WTC11 (cell line): ENCODE measurements at regions of chr19 and their contacts with region 1.

Region 1: DNA sequence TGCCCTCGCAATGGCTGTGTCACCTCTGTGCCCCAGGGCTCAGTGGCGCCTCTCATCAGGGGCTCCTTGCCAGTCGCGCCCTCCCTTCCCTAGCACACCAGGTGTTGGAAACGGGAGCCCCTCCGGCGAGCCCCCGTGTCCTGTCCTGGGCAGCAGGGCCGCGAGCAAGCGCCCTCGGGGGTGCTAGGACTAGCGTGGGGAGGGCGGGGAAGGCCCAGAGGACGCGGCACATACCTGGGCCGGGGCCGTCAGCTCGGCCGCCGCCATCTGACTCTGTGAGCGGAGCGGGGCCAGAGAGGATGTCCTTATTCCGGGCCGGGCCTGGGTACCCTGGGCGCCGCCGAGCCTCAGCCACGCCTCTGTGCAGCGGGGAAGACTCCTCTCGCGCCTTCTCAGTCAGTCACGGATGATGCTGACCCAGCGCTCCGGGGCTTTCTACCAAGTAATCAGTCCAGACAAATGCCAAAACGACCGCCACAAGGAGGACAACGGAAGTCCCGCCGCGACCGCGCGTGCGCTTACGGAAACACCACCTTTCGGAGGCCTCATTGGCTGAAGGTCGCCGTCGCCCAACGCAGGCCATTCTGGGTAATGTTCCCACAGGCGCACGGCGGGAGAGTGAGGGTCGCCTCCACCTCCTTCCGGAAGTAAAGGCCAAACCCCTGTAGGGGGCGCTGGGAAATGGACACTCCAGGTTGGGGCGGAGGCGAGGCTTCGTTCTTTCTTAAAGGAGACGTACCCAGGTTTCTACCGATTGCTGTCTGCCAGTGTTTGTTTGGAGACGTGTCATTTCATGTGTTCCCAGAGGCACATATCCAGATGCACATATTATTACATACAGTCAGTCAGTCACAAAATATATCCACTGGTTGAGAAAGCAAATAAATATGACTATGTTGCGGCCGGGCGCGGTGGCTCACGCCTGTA is at the start of gene ZNF256:
- DNase-seq: peak; percentile 99
- ATAC-seq: peak; percentile 98
- H3K4me3 Mint-ChIP-seq: peak within 1 kb of the TSS; percentile 92
- H3K27ac Mint-ChIP-seq: peak within 1 kb of the TSS; percentile 87
- H3K4me1 Mint-ChIP-seq: peaks cover 13% of the 10 kb centered on the region
- H3K27me3 Mint-ChIP-seq: peaks cover 19% of the 10 kb centered on the region
- CTCF ChIP-seq: peak; percentile 63; the same call in 1 of the 2 replicates
- total RNA-seq, gene ZNF256: 15.1 to 17.9 TPM (median 15.9 TPM) in 3 replicates

Region 2: DNA sequence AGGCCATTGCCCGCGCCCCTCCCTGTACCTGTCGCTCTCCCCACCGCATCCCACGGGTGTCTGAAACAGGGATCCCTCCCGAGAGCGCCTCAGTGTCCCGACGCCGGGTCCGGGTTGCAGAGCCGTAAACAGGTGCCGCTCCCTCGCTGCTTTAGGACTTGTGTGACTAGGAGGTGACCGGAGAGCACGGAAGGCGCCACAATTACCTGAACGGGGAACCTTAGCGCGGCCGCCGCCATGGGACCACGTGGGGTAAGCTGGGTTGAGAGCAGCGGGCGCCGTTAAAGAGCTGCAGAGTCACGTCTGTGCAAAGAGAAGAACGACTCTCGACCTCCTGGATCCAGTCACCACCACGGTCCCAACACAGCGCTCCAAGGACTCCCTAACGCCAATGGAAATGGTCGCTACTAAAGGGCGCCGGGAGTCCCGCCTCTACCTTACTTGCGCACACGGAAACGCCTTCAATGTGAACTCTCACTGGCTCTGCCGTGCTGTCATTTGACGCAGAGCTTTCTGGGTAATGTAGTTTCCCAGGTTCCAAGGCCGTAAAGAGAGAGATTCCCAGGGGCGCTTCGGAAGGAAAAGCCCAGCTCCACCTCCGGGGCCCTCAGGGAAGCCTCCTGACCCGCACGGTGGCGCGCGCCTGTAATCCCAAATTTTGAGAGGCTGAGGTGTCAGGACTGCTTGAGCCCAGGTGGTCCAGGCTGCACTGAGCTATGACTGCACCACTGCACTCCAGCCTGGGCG is 132.8 kb before region 1 on chr19 and contains the start of gene ZNF552:
- CTCF ChIA-PET with region 1: no interaction called
- POLR2A ChIA-PET with region 1: no interaction called
- DNase-seq: peak; percentile 85
- ATAC-seq: peak; percentile 88
- H3K4me3 Mint-ChIP-seq: peak within 1 kb of the TSS; percentile 96
- H3K27ac Mint-ChIP-seq: peak within 1 kb of the TSS; percentile 92
- H3K4me1 Mint-ChIP-seq: peaks cover 38% of the 10 kb centered on the region
- H3K27me3 Mint-ChIP-seq: no peaks in the 10 kb centered on the region
- CTCF ChIP-seq: no peak
- total RNA-seq, gene ZNF552: 9.0 to 13.1 TPM (median 9.3 TPM) in 3 replicates

Region 3: DNA sequence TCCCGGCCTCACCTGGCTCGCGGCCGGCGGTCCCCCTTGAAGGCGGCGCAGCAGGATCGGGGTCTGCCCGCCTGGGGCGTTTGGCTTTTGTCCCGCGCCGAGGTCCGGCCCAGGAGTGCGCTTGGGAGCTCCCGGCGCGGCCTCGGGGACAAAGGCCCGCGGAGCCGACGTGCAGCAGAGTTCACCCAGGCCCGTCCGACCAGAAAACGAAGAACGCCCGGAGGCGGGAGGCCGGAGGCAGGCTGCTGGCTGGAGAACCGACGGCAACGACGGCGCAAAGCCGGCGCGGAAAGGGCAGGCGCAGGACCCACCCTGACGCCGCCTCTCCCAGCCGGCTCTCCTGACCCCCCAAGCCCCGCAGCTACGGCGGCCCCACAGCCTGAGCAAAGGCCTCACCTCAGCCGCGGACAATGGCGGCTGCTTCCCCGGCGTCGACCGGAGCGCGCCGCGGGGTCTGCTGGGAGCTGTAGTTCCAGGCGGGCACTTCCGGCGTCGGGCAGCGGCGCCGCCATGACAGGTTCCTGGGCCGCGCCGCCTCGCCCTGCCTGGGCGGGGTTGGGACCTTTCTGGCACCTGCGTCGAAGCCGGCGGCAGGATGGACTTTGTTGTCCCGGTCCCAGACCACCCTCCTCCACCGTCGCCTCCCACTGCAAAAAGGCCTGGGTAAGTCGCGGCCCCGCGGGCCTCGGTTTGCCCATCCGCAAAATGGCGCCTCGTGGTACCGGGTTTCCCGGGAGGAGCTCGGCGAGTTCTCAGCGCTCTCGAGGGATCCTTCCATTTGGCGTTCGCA is 55.1 kb after region 1 on chr19 and contains the start of gene ZNF606:
- CTCF ChIA-PET with region 1: interaction called, 10 read pairs
- POLR2A ChIA-PET with region 1: interaction called, 3 read pairs
- DNase-seq: peak; percentile 86
- ATAC-seq: peak; percentile 90
- H3K4me3 Mint-ChIP-seq: peak within 1 kb of the TSS; percentile 95
- H3K27ac Mint-ChIP-seq: peak within 1 kb of the TSS; percentile 91
- H3K4me1 Mint-ChIP-seq: peaks cover 22% of the 10 kb centered on the region
- H3K27me3 Mint-ChIP-seq: no peaks in the 10 kb centered on the region
- CTCF ChIP-seq: no peak
- total RNA-seq, gene ZNF606: 24.5 to 26.2 TPM (median 26.1 TPM) in 3 replicates